Activated T-helper 1 cell treated with anti-CD3 and anti-CD28 coated beads, Interleukin-12 subunit alpha, Interleukin-12 subunit beta, Interleukin-2, Interleukin-4 antibody, amounts not matched to agents 30 ng/mL and 10 ng/mL and 1 ng/mL, durations not matched to agents 14 hours and 24 hours and 36 hours (primary cell): ENCODE measurements at regions of chr3 and their contacts with region 1.

Region 1: GRCh38 chr3:119559441-119559963 is at the start of gene CD80:
- DNase-seq: peak; percentile 67
- H3K4me3 Mint-ChIP-seq: peak within 1 kb of the TSS; percentile 79
- H3K27ac Mint-ChIP-seq: peak within 1 kb of the TSS; percentile 88
- H3K4me1 Mint-ChIP-seq: peaks cover 73% of the 10 kb centered on the region
- H3K27me3 Mint-ChIP-seq: peaks cover 4% of the 10 kb centered on the region
- total RNA-seq, gene CD80: 18.1 and 19.5 TPM in 2 replicates

Region 2: DNA sequence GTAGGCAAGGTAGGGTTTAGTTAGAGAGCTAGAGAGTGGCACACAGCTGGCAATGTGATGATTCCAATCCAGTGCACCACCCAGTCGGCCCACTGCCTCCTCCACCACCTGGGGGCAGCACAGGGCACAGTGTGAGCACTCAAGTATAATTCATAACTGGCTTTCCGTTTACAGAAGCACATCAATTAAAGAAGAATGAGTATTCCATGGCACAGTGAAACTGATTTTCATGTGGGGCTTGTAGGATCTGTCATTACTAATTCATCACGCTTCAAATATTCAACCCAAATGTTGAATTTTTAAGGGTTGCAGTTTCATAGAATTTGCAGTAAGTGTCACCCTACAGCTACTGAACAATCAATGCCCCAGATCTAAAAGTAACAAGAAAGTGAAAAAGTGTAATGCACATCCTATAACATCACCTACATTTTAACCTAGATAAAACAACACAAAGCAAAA is 674.7 kb before region 1 on chr3:
- intact Hi-C with region 1: loop called (anchors 5 kb)
- DNase-seq: peak; percentile 57
- H3K4me3 Mint-ChIP-seq: no peak overlapping the region
- H3K27ac Mint-ChIP-seq: no peak overlapping the region
- H3K4me1 Mint-ChIP-seq: peaks cover 8% of the 10 kb centered on the region
- H3K27me3 Mint-ChIP-seq: peaks cover 6% of the 10 kb centered on the region

Region 3: DNA sequence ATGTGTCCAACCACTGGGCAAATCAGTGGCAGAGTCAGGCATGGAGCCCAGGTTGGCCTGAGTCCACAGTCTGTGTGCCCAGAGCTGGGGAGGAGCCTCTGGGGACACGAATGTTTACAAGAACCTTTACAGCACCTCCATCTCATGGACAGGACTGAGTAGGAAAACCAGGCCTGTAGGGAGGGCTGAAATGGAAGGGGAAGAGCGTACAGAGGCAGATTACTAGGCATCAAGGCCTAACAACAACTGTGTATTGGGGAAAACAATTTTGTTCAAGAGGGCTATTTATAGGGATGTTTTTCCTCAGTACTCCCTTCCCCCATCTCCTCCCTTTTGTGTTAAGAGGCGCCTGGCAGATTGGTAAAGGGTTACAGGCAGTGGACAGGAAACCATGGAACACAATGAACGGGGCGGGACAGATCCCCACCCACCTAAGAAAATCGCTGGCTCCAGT is 280.4 kb before region 1 on chr3:
- intact Hi-C with region 1: loop called (anchors 1 kb)
- DNase-seq: no peak
- H3K4me3 Mint-ChIP-seq: no peak overlapping the region
- H3K27ac Mint-ChIP-seq: no peak overlapping the region
- H3K4me1 Mint-ChIP-seq: peaks cover 5% of the 10 kb centered on the region
- H3K27me3 Mint-ChIP-seq: peaks cover 7% of the 10 kb centered on the region

Region 4: DNA sequence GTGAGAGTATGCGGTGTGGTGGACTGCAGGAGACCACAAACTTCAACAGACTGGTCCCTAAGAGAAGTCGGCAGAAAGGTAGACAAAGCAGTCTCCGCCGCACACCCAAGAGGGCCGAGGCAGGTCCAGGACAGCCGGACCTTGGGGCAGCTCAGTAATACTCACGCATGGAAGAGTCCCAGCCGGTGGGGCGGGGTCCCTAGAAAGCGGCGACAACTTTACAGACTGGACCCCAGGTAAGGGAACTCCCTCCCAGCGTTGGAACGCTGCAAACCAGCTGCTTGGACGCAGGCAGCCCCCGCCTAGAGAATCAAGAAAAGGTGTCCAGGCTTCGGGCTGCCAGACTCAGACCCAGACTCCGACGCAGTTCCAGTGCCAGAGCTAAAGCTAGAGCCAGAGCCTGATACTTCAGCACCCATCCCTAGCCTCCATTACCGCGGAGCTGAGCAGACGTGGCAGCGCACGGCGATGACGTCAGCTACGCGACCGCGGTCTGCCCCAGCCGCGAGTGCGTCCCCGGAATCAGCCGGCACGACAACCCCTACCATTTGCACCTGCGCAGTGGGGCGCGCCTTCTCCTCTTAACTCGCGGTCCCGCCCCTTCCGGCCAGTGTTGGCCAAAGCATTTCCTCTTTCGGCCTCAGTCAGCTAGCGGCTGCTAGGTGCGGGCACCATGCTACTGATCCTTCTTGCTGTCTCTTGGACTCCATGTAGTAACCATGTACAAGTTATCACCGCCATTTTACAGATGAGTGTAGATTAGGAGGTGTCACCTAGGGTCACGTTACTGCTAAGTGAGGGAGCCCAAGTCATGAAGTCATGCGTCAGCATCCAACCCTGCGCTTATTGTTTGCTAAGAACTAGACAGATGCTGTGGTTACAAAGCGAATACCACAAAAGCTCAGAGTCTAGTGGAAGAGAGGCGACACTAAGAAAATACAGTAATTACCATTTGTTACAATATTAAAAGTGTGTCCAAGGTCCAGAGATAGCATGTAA is 96.0 kb before region 1 on chr3 and contains the start of gene TMEM39A:
- intact Hi-C with region 1: loop called (anchors 1 kb)
- DNase-seq: peak; percentile 98
- H3K4me3 Mint-ChIP-seq: peak within 1 kb of the TSS; percentile 98
- H3K27ac Mint-ChIP-seq: peak within 1 kb of the TSS; percentile 97
- H3K4me1 Mint-ChIP-seq: peaks cover 49% of the 10 kb centered on the region
- H3K27me3 Mint-ChIP-seq: peaks cover 3% of the 10 kb centered on the region
- total RNA-seq, gene TMEM39A: 51.3 and 56.9 TPM in 2 replicates

Region 5: GRCh38 chr3:119508172-119508845 is 51.2 kb before region 1 on chr3:
- intact Hi-C with region 1: loop called (anchors 1 kb)
- DNase-seq: peak; percentile 31
- H3K4me3 Mint-ChIP-seq: peak overlapping the region; percentile 5
- H3K27ac Mint-ChIP-seq: peak overlapping the region; percentile 89
- H3K4me1 Mint-ChIP-seq: peaks cover 39% of the 10 kb centered on the region
- H3K27me3 Mint-ChIP-seq: no peaks in the 10 kb centered on the region

Region 6: GRCh38 chr3:119579366-119580165 is 20.1 kb after region 1 on chr3 and contains the start of gene ADPRH:
- intact Hi-C with region 1: loop called (anchors 1 kb)
- DNase-seq: peak; percentile 47
- H3K4me3 Mint-ChIP-seq: peak within 1 kb of the TSS; percentile 90
- H3K27ac Mint-ChIP-seq: peak within 1 kb of the TSS; percentile 95
- H3K4me1 Mint-ChIP-seq: peaks cover 37% of the 10 kb centered on the region
- H3K27me3 Mint-ChIP-seq: peaks cover 6% of the 10 kb centered on the region
- total RNA-seq, gene ADPRH: 3.8 and 4.6 TPM in 2 replicates